Breast epithelium (tissue), 4 donors: ENCODE measurements at regions of chr13 and their contacts with region 1.

Region 1: GRCh38 chr13:30865123-30866049 is 40.7 kb upstream of the MEDAG start:
- DNase-seq: peak; percentile 70 to 78
- H3K4me3 ChIP-seq: no peak overlapping the region
- H3K27ac ChIP-seq: peak overlapping the region; percentile 86 to 91
- H3K4me1 ChIP-seq: peaks cover 0 to 10% of the 10 kb centered on the region in 2 donors
- H3K27me3 ChIP-seq: no peaks in the 10 kb centered on the region
- CTCF ChIP-seq: peak; percentile 90 to 94 (median 92)
- POLR2A ChIP-seq: no peak

Region 2: GRCh38 chr13:29196409-29197074 is 1668.8 kb before region 1 on chr13:
- intact Hi-C with region 1: no loop called
- DNase-seq: no peak
- H3K4me3 ChIP-seq: no peak overlapping the region
- H3K27ac ChIP-seq: no peak overlapping the region
- H3K4me1 ChIP-seq: no peaks in the 10 kb centered on the region
- H3K27me3 ChIP-seq: no peaks in the 10 kb centered on the region
- CTCF ChIP-seq: no peak
- POLR2A ChIP-seq: no peak

Region 3: DNA sequence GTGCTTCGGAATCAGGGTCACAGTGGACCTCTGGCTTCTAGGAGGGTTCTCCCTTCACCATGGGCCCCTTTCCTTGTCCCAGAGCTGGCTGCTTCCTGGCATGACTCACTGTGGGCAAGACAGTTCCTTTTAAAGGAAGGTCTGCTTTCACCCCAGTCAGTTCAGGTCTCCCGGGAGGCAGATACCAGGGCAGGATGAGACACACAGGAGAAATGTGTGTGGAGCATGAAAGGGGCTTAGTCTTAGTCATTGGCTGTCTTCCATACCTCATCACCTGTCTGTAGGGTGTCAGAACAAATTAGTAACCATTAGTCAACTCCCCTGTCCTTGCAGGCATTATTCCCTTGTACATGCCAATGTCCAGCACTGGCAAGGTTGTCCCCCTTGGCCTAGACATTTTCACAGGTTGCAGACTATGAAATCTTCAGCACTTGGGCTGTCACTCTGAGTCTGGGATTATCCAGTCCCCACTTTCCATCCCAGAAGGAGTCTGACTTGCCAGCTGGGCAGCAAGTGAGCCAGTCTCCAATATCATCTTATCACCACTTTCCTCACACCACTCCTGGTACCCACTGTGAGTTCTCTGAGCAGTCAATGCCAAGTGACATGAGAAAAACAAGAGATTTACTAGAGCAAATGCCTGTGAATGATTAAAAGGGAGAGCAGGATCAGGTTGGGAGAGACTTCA is 36.1 kb before region 1 on chr13:
- intact Hi-C with region 1: no loop called
- DNase-seq: no peak
- H3K4me3 ChIP-seq: no peak overlapping the region
- H3K27ac ChIP-seq: no peak overlapping the region
- H3K4me1 ChIP-seq: no peaks in the 10 kb centered on the region
- H3K27me3 ChIP-seq: no peaks in the 10 kb centered on the region
- CTCF ChIP-seq: no peak
- POLR2A ChIP-seq: no peak

Region 4: GRCh38 chr13:30840515-30840914 is 24.9 kb before region 1 on chr13:
- intact Hi-C with region 1: no loop called
- DNase-seq: no peak
- H3K4me3 ChIP-seq: no peak overlapping the region
- H3K27ac ChIP-seq: no peak overlapping the region
- H3K4me1 ChIP-seq: no peaks in the 10 kb centered on the region
- H3K27me3 ChIP-seq: no peaks in the 10 kb centered on the region
- CTCF ChIP-seq: no peak
- POLR2A ChIP-seq: no peak

Region 5: DNA sequence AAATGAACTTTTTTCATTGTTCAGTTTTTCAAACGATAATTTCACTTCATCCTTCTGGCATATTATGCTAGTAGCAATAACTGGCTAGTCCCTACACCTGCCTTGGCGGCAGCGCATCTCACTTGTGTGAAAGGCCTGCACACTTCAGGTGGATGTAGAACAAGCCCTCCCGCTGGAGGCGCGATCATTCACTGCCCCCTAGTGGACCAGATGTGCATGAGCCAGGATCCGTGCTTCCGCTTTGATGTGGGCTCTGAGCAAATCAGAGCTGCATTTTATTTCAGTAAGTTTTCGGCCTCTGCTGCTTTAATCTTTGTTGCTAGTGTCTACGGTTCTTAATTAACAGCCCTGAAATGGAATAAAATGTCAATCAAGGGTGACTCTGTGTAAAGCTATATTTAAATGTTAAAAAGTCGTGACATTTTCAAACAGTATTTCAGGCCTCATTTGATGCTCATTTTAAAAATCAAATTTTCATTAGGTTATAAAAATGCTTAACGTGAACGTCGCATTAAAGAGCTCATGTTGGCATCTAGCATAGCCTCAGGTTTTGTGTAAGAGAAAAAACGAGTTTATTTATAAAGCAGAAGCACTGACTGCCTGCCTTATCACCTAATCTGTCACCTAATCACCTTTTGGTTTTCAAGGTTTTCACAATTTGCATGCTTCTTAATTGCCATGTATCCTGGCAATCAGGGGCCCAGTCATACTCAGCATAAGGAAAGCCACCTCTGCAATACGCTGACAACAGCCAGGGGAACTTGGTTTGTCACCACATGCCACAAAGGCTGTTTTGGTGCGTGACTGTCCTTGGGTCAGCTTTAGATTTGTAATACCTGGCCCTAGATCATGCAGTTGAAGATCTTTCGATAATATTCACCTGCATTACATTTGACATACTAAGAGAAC is 179.2 kb after region 1 on chr13:
- intact Hi-C with region 1: loop called (anchors 5 kb)
- DNase-seq: peak; percentile 79 to 87
- H3K4me3 ChIP-seq: no peak overlapping the region
- H3K27ac ChIP-seq: peak overlapping the region; percentile 50 to 75
- H3K4me1 ChIP-seq: peaks cover 0 to 4% of the 10 kb centered on the region in 2 donors
- H3K27me3 ChIP-seq: no peaks in the 10 kb centered on the region
- CTCF ChIP-seq: peak; percentile 88 to 93 (median 92)
- POLR2A ChIP-seq: no peak